ENCODE measurements at regions of chr1 and their contacts with region 1.

Region 1: DNA sequence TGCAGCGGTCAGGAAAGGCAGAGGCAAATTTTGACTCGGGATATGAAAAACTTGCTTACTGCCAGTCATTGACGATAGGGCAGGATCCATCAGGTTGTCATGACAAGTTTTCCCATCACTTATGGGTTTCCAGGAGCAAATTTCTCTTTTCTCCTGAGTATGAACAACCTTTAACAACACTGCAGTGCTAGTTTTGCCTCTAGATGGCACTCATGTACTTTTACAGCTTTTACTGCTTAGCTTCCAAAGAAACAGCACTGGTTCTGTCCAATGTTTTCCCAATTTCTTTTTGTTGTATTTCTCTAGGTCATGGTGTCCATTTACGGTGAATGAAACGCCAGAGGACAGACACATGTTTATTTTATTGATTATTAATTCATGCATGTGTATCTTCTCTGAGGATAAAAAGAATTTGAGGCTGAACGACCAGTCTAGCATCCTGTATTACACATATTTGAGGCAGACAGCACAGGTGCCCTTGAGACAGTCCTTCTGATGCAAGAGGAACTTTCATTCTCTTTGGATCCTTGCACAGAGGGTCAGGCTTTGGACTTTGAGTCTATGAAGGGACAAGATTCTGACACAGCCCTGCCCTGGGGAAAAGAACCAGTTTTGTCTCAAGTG is 112.3 kb upstream of the TRABD2B start:
- DNase-seq: no peak
- ATAC-seq: peak; percentile 87
- H3K4me3 Mint-ChIP-seq: no peak overlapping the region
- H3K27ac Mint-ChIP-seq: no peak overlapping the region
- H3K4me1 Mint-ChIP-seq: peaks cover 22% of the 10 kb centered on the region
- H3K27me3 Mint-ChIP-seq: no peaks in the 10 kb centered on the region
- CTCF ChIP-seq: peak; percentile 53; the same call in 1 of the 2 replicates

Region 2: DNA sequence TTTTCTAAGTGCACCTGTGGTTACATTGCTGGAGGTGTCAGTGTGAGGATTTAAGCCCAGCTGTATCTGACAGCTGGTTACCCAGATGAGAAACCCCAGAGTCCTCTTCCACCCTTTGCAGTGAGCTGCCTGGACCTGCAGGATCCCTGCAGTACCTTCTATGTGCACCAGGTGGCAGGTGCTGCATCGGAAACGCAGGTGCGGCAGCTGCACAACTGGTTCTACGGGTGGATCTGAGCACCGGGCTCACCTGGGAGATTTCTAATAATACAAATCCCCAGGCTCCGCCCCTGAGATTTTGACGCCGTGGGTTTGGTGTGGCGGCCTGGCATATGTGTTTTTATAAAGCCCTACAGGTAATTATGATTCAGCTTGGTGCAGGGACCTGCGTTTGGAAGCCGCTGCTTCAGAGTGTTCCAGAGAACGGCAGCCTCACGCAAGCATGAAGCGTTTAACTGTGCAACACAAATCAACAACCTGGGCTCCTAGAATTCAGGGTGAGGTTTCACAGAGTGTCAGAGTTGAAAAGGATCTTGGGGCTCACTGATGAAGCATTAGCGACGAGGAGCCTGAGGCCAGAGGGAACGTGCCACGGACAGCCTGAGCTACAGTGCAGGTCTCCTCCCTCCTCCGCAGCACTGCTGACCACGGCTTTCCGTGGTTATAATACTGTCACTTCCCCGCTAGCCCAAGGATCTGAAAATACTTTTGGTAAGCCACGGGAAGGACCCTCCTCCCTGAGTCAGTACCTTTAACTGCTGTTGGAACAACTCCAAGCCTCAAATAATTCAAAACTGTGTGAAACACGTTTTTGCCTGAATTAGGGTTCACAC is 15.6 kb before region 1 on chr1:
- CTCF ChIA-PET with region 1: interaction called, 11 read pairs
- POLR2A ChIA-PET with region 1: no interaction called
- DNase-seq: peak; percentile 91
- ATAC-seq: peak; percentile 97
- H3K4me3 Mint-ChIP-seq: peak overlapping the region; percentile 40
- H3K27ac Mint-ChIP-seq: no peak overlapping the region
- H3K4me1 Mint-ChIP-seq: peaks cover 4% of the 10 kb centered on the region
- H3K27me3 Mint-ChIP-seq: peaks cover 54% of the 10 kb centered on the region
- CTCF ChIP-seq: peak; percentile 82

Region 3: DNA sequence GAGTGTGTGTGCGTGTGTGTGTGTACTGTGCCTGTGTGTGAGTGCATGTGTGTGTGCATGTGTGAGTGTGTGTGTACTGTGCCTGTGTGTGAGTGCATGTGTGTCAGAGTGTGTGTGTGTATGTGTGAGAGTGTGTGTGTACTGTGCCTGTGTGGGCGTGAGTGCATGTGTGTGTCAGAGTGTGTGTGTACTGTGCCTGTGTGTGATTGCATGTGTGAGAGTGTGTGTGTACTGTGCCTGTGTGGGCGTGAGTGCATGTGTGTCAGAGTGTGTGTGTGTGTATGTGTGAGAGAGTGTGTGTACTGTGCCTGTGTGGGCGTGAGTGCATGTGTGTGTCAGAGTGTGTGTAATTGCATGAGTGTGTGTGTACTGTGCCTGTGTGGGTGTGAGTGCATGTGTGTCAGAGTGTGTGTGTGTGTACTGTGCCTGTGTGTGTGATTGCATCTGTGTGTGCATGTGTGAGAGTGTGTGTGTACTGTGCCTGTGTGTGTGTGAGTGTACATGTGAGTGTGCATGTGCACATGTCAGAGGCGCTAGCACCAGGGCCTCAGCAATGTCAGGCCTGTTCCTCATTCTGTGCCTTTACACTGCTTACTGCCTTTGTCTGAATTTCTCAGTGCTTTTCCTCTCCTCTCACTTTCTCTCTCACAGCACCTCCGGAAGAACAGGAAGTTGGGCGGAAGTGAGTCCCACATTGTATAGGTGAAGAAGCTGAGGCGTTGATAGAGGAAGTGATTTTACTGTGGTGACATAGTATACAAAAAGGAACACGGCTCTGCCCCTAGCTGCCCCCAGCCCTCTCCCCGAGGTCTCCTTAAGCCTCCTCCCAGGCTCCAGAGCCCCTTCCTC is 117.9 kb after region 1 on chr1:
- CTCF ChIA-PET with region 1: interaction called, 17 read pairs
- POLR2A ChIA-PET with region 1: no interaction called
- DNase-seq: no peak
- ATAC-seq: no peak
- H3K4me3 Mint-ChIP-seq: no peak overlapping the region
- H3K27ac Mint-ChIP-seq: no peak overlapping the region
- H3K4me1 Mint-ChIP-seq: peaks cover 4% of the 10 kb centered on the region
- H3K27me3 Mint-ChIP-seq: no peaks in the 10 kb centered on the region; the same call in 1 of the 2 replicates
- CTCF ChIP-seq: no peak

Region 4: GRCh38 chr1:48236716-48237470 is 127.4 kb after region 1 on chr1:
- CTCF ChIA-PET with region 1: interaction called, 17 read pairs
- POLR2A ChIA-PET with region 1: no interaction called
- DNase-seq: no peak
- ATAC-seq: peak; percentile 87
- H3K4me3 Mint-ChIP-seq: no peak overlapping the region
- H3K27ac Mint-ChIP-seq: no peak overlapping the region
- H3K4me1 Mint-ChIP-seq: no peaks in the 10 kb centered on the region
- H3K27me3 Mint-ChIP-seq: peaks cover 3% of the 10 kb centered on the region
- CTCF ChIP-seq: peak; percentile 33; the same call in 1 of the 2 replicates

Region 5: DNA sequence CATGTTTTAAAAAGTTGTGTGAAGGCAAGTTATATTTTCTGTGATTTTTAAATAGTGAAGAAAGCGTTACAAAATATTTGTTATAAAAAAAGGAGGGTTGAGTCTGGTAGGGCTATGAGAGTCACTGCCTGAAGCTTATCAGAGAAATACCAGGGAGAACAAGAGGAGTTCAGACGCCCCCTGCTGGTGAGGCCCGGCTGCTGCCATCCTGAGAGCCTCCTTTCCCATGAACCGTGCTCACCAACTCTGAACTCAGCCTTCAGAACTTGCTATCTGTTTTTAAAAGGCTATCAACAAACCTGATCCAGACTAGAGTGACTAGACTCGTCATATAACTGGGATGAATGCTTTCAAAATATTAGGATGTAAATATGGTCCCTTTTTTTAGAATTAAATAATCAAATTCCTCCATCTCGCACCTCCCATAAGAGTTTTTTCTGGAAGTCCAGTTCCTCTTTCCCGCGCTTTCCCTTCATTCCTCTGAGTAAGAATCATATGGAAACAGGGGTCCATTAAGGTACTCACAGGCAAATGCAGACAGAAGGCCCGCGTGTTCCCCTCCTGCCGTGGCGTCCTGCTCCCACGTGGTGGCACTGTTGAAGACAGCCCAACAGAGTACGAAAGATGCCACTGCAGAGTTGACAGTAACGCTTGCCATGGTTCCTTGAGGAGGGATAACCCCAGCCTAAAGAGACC is 388.7 kb after region 1 on chr1:
- CTCF ChIA-PET with region 1: interaction called, 10 read pairs
- POLR2A ChIA-PET with region 1: no interaction called
- DNase-seq: peak; percentile 86
- ATAC-seq: peak; percentile 75
- H3K4me3 Mint-ChIP-seq: no peak overlapping the region
- H3K27ac Mint-ChIP-seq: no peak overlapping the region
- H3K4me1 Mint-ChIP-seq: peaks cover 54% of the 10 kb centered on the region
- H3K27me3 Mint-ChIP-seq: no peaks in the 10 kb centered on the region; the same call in 1 of the 2 replicates
- CTCF ChIP-seq: peak; percentile 92

Region 6: GRCh38 chr1:48530727-48531351 is 421.3 kb after region 1 on chr1:
- CTCF ChIA-PET with region 1: interaction called, 19 read pairs
- POLR2A ChIA-PET with region 1: no interaction called
- DNase-seq: peak; percentile 98
- ATAC-seq: peak; percentile 92
- H3K4me3 Mint-ChIP-seq: no peak overlapping the region
- H3K27ac Mint-ChIP-seq: no peak overlapping the region
- H3K4me1 Mint-ChIP-seq: peaks cover 38% of the 10 kb centered on the region
- H3K27me3 Mint-ChIP-seq: no peaks in the 10 kb centered on the region
- CTCF ChIP-seq: peak; percentile 88

Measured in WTC11 (cell line).